ENCODE measurements at regions of chr20 and their contacts with region 1.

Region 1: DNA sequence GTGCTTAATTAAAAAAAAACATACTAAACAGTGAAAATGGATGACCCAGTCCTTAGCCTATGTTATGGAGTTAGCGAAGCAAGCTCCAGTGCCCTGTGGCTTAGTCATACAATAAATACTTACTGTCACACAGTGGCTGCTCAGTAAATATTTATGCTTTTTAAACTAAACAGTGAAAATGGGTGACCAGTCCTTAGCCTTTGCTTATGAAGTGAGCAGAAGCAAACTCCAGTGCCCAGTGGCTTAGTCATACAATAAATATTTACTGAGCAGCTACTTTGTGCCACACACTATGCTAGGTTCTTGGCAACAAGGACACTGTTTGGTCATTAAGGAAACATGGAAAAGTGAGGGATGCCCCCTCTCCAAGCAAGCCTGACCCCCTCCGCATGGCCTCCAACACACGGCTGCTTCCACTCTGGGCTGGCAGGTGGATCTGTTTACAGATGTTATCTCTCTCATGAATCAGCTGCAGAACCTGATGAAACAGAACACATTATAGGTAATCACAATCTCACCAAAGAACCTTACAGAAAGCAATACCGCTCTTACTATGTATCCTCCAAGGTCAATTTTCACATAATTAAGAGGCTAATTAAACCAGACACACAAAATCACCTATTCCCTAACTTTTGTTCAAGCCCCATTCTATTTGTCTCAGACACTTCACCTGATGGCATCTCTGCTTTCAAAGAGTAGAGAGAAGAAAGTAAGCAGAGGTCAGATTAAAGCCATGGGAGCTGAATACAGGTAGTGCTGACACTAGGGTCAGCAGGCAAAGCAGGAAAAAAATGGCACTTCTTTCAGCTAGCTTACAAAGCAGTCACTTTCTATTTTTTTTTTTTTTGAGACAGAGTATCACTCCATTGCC is 27.3 kb downstream of the CDK5RAP1 start:
- DNase-seq: no peak
- ATAC-seq: no peak
- H3K4me3 ChIP-seq: no peak overlapping the region
- H3K27ac ChIP-seq: no peak overlapping the region
- H3K4me1 ChIP-seq: no peaks in the 10 kb centered on the region
- H3K27me3 ChIP-seq: no peaks in the 10 kb centered on the region
- CTCF ChIP-seq: no peak

Region 2: DNA sequence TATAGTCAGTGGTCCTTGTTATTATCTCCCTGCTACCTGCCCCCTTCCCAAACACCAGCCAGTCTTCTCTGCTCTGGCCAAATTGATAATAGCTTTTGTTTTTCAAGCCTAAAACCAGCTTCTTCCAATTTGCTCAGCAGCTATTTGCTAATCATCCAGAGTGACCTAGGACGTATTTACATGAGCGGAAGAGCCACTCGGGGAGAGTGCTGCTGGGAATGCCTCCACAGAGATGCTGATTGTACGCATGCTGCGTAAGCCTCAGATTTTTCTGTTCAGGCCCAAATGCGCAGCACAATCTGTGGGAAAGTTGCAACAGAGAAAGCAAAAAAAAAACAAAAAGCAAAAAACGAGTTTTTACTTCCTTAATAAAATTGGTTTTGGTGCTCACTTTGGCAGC is 1793.3 kb before region 1 on chr20:
- intact Hi-C with region 1: loop called in 1 of 2 experiments (anchors 5 kb)
- DNase-seq: no peak
- ATAC-seq: no peak
- H3K4me3 ChIP-seq: no peak overlapping the region
- H3K27ac ChIP-seq: no peak overlapping the region
- H3K4me1 ChIP-seq: no peaks in the 10 kb centered on the region
- H3K27me3 ChIP-seq: no peaks in the 10 kb centered on the region
- CTCF ChIP-seq: no peak

Region 3: DNA sequence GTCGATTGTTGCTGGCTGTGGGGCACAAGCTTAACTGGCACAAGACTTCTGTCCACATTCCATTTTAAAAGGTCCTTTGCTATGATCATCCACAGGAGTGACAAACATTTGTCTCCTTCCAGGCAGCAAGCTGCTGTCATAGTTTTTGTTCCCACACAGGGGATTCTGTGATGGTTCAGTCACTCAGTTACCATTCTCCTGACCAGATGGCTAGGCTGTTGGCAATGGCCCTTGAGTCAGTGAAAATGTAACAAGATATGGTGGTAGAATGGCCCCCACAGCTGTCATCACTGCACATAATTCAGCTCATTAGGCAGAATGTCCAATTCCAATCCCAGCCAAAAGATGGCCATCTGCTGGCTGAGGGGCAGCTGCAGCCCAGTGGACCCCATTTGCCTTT is 124.5 kb before region 1 on chr20:
- intact Hi-C with region 1: no loop called
- DNase-seq: no peak
- ATAC-seq: no peak
- H3K4me3 ChIP-seq: no peak overlapping the region
- H3K27ac ChIP-seq: no peak overlapping the region
- H3K4me1 ChIP-seq: no peaks in the 10 kb centered on the region
- H3K27me3 ChIP-seq: peaks cover 0 to 3% (median 2%) of the 10 kb centered on the region in 3 donors
- CTCF ChIP-seq: no peak

Measured in psoas muscle (tissue), 8 donors.